ENCODE measurements at regions of chr14 and their contacts with region 1.

Region 1: DNA sequence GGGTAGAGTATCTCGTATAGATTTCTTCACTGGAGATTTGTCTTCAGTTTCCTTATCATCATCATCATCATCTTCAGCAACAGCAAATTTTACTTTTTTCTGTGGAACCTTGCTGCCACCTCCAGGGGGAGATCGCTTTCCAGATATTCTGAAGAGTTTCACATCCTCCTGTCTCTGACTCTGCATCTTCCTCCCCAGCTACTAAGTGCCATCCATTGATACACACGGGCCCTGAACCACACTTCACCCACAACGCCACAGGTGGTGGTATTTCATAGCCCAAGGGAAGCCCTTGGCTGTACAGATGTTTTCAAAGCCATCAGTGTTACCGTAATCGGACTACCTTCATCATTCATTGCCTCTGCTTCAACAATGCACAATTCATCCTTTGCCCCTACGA is 82.2 kb downstream of the PPP2R5C start:
- DNase-seq: peak; percentile 48 to 69 (median 57)
- H3K4me3 ChIP-seq: no peak overlapping the region
- H3K4me3 Mint-ChIP-seq: peak overlapping the region; percentile 0 to 84 (median 54)
- H3K27ac ChIP-seq: no peak overlapping the region
- H3K27ac Mint-ChIP-seq: peak overlapping the region; percentile 50 to 96 (median 85)
- H3K4me1 ChIP-seq: peaks cover 88% of the 10 kb centered on the region
- H3K4me1 Mint-ChIP-seq: peaks cover 81 to 99% (median 93%) of the 10 kb centered on the region in 3 donors
- H3K27me3 ChIP-seq: no peaks in the 10 kb centered on the region
- H3K27me3 Mint-ChIP-seq: peaks cover 0 to 2% of the 10 kb centered on the region in 2 donors

Region 2: DNA sequence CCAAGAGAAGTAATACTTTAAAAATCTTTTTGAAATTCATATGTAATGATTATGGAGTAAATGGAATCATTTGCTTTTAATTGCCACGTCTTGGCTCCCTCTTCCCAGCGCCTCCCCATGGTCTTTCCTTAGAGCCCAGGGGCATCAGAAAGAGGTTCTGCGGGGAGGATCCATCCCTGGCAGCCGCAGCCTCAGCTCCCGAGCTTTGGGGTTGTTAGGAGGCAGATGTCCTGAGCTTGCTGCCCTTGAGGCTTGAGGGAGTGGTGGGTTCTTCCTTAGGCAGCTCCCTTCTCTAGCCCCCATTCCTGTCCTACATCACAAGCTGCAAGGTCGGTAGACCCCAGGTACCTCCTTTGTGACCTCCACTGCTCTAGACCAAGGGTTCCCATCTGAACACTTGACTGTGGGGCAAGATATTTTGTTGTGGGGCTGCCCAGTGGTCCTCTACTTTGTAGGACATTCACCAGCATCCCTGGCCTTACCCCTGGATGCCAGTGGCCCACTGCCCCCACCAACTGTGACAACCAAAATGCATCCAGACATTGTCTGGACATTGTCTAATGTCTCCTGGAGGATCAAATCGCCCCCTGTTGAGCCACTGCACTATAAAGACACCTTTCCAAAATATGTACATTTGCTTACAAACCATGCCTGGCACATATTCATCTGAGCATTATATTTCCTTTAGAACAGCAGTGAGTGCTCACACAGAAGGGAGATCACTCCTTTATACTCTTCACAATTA is 75.9 kb before region 1 on chr14:
- CTCF ChIA-PET with region 1: interaction called, 29 read pairs
- POLR2A ChIA-PET with region 1: interaction called, 3 read pairs
- DNase-seq: no peak
- H3K4me3 ChIP-seq: no peak overlapping the region
- H3K4me3 Mint-ChIP-seq: no peak overlapping the region
- H3K27ac ChIP-seq: no peak overlapping the region
- H3K27ac Mint-ChIP-seq: peak overlapping the region in 4 of 8 donors; percentile 36 to 85 (median 44)
- H3K4me1 ChIP-seq: peaks cover 30% of the 10 kb centered on the region
- H3K4me1 Mint-ChIP-seq: peaks cover 34 to 75% (median 46%) of the 10 kb centered on the region in 3 donors
- H3K27me3 ChIP-seq: no peaks in the 10 kb centered on the region
- H3K27me3 Mint-ChIP-seq: peaks cover 0 to 3% of the 10 kb centered on the region in 2 donors

Region 3: DNA sequence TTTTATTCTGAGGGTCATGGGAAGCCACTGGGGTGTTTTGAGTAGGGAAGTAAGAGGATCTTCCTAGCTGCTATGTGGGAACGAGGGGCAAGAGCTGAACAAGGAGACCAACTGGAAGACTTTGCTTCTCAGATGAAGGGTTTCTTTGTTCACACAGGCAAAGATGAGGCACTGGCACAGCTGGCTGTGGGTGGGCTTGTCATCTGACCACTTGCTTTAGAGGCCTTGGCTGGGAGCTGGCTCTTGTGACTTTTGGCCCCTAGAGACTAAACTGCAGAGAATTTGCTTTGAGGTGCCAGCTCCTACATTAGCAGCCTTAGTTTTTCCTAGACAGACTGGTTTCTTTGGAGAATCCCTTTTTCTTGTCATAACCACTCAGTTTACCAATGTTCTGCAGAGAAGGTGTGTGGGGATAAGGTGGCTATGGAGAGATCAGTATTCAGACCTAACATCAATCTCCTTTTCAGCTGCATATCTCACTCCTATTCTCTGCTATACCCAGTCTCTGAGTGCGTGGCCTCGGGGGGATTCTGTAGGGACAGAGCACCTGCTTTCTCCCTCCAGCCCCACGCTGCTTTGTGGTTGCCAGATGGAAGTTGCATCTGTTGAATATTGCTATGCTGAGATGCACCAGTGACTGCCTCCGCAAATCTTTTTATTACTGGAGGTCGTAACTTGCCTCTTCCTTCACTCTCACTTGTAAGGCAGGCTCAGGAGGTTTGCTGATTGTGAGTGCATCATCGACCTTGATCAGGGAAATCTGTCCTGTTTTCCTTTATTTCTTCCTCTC is 69.5 kb before region 1 on chr14:
- CTCF ChIA-PET with region 1: interaction called, 29 read pairs
- POLR2A ChIA-PET with region 1: interaction called, 6 read pairs
- DNase-seq: no peak
- H3K4me3 ChIP-seq: no peak overlapping the region
- H3K4me3 Mint-ChIP-seq: no peak overlapping the region
- H3K27ac ChIP-seq: no peak overlapping the region
- H3K27ac Mint-ChIP-seq: peak overlapping the region in 7 of 8 donors; percentile 39 to 74 (median 67)
- H3K4me1 ChIP-seq: peaks cover 7% of the 10 kb centered on the region
- H3K4me1 Mint-ChIP-seq: peaks cover 37 to 76% (median 45%) of the 10 kb centered on the region in 3 donors
- H3K27me3 ChIP-seq: no peaks in the 10 kb centered on the region
- H3K27me3 Mint-ChIP-seq: no peaks in the 10 kb centered on the region

Region 4: GRCh38 chr14:101884991-101885576 is 41.4 kb after region 1 on chr14:
- CTCF ChIA-PET with region 1: no interaction called
- POLR2A ChIA-PET with region 1: no interaction called
- DNase-seq: no peak
- H3K4me3 ChIP-seq: no peak overlapping the region
- H3K4me3 Mint-ChIP-seq: no peak overlapping the region
- H3K27ac ChIP-seq: no peak overlapping the region
- H3K27ac Mint-ChIP-seq: peak overlapping the region in 4 of 8 donors; percentile 4 to 23 (median 22)
- H3K4me1 ChIP-seq: peaks cover 8% of the 10 kb centered on the region
- H3K4me1 Mint-ChIP-seq: peaks cover 22 to 32% (median 25%) of the 10 kb centered on the region in 3 donors
- H3K27me3 ChIP-seq: no peaks in the 10 kb centered on the region
- H3K27me3 Mint-ChIP-seq: peaks cover 0 to 2% of the 10 kb centered on the region in 2 donors

Region 5: DNA sequence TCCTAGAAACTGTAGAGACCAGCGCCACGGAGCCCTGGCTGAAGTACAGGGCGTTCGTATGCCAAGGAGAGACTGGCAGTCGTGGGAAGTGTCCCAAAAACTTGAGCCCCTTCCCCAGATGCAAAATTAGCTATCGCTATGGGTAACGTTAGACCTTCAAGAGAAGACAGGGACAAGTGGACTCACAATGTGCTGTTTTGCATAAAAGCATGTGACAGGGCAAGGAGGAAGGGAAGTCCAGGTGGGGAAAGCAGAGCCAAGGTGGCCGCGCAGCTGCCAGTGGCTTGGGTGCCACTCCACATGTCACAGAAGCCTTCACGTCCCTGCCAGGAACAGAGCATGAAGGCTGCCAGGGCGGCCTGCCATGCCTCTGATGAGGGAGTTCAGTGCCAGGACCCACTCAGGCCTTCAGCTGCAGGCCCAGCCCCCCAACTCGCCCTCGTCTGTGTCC is 59.5 kb after region 1 on chr14:
- CTCF ChIA-PET with region 1: no interaction called
- POLR2A ChIA-PET with region 1: no interaction called
- DNase-seq: no peak
- H3K4me3 ChIP-seq: no peak overlapping the region
- H3K4me3 Mint-ChIP-seq: no peak overlapping the region
- H3K27ac ChIP-seq: no peak overlapping the region
- H3K27ac Mint-ChIP-seq: peak overlapping the region in 2 of 8 donors; percentile 70 to 84
- H3K4me1 ChIP-seq: no peaks in the 10 kb centered on the region
- H3K4me1 Mint-ChIP-seq: no peaks in the 10 kb centered on the region
- H3K27me3 ChIP-seq: no peaks in the 10 kb centered on the region
- H3K27me3 Mint-ChIP-seq: no peaks in the 10 kb centered on the region

Region 6: DNA sequence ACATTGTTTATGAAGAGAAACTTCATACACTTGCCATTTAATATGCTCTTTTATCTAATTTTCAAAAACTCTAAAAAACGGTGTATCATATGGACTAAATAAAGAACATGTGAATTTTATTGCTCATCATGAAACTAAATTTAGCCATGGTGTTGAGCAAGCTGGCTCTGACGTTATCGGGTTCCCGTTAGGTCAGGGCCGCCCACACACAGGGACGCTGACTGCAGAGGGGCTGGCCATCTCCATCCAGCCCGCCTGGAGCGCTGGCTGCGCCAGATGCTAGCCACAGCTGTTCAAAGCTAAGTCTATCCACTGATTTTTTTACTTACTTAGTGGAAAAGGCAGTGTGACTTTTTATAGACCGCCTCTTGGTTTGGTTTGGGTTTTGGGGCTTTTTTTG is 84.2 kb after region 1 on chr14:
- CTCF ChIA-PET with region 1: no interaction called
- POLR2A ChIA-PET with region 1: no interaction called
- DNase-seq: no peak
- H3K4me3 ChIP-seq: no peak overlapping the region
- H3K4me3 Mint-ChIP-seq: no peak overlapping the region
- H3K27ac ChIP-seq: no peak overlapping the region
- H3K27ac Mint-ChIP-seq: peak overlapping the region in 2 of 8 donors; percentile 54 to 64
- H3K4me1 ChIP-seq: no peaks in the 10 kb centered on the region
- H3K4me1 Mint-ChIP-seq: peaks cover 0 to 2% (median 0%) of the 10 kb centered on the region in 3 donors
- H3K27me3 ChIP-seq: no peaks in the 10 kb centered on the region
- H3K27me3 Mint-ChIP-seq: no peaks in the 10 kb centered on the region

Region 7: GRCh38 chr14:102622262-102622885 is 778.7 kb after region 1 on chr14:
- CTCF ChIA-PET with region 1: no interaction called
- POLR2A ChIA-PET with region 1: no interaction called
- DNase-seq: no peak
- H3K4me3 ChIP-seq: no peak overlapping the region
- H3K4me3 Mint-ChIP-seq: peak overlapping the region in 1 of 7 donors; percentile 2
- H3K27ac ChIP-seq: no peak overlapping the region
- H3K27ac Mint-ChIP-seq: peak overlapping the region in 4 of 8 donors; percentile 7 to 29 (median 22)
- H3K4me1 ChIP-seq: peaks cover 5% of the 10 kb centered on the region
- H3K4me1 Mint-ChIP-seq: peaks cover 35 to 50% (median 43%) of the 10 kb centered on the region in 3 donors
- H3K27me3 ChIP-seq: no peaks in the 10 kb centered on the region
- H3K27me3 Mint-ChIP-seq: no peaks in the 10 kb centered on the region

Measured in CD8-positive, alpha-beta memory T cell (primary cell).